Esophagus muscularis mucosa (tissue), 4 donors: ENCODE measurements at regions of chr18 and their contacts with region 1.

Region 1: GRCh38 chr18:79528846-79529245 is 133.1 kb downstream of the NFATC1 start:
- DNase-seq: no peak
- H3K4me3 ChIP-seq: no peak overlapping the region
- H3K27ac ChIP-seq: no peak overlapping the region
- H3K4me1 ChIP-seq: peaks cover 15 to 28% (median 24%) of the 10 kb centered on the region in 4 donors
- H3K27me3 ChIP-seq: peaks cover 0 to 15% (median 0%) of the 10 kb centered on the region in 4 donors
- CTCF ChIP-seq: peak; percentile 88 to 99 (median 90)
- EP300 ChIP-seq: no peak
- POLR2A ChIP-seq: no peak

Region 2: DNA sequence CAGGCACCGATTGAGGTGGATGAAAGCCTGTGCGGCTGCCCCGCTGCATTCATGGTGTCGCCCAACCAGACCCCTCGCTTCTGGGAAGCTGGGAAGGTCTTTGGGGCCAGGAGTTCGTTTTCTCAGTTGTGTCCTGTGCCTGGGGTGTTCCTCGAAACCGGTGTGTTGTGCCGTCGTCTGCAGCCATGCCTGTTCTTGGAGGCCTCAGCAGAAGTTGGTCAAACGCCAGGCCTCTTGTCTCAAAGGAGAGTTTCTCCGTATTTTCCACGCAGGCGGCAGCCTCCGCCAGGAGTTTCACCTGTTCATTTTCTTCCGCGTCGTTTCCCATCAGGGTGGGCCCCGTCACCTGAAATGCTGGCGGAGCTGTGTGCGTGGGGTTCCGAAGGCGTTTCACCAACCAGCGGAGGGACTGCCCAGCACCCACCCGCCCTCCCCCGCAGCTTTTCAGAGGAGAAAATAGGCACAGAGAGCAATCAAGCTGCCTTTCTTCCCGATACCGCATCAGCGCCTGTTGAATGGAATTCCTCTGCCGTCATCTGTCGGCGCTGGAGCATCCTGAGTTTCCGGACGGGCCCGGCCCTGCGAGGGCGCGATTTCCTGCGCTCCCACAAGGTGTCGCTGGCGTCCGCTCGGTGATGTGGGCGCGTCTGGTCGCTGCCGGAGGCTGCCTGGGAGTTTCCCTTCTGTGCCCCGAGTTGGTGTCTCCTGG is 150.2 kb before region 1 on chr18:
- intact Hi-C with region 1: loop called (anchors 2 kb)
- DNase-seq: no peak
- H3K4me3 ChIP-seq: no peak overlapping the region
- H3K27ac ChIP-seq: no peak overlapping the region
- H3K4me1 ChIP-seq: peaks cover 4 to 14% (median 9%) of the 10 kb centered on the region in 4 donors
- H3K27me3 ChIP-seq: no peaks in the 10 kb centered on the region
- CTCF ChIP-seq: peak; percentile 95 to 99 (median 96)
- EP300 ChIP-seq: no peak
- POLR2A ChIP-seq: no peak